Spleen (tissue), 13 donors: ENCODE measurements at regions of chr16 and their contacts with region 1.

Region 1: DNA sequence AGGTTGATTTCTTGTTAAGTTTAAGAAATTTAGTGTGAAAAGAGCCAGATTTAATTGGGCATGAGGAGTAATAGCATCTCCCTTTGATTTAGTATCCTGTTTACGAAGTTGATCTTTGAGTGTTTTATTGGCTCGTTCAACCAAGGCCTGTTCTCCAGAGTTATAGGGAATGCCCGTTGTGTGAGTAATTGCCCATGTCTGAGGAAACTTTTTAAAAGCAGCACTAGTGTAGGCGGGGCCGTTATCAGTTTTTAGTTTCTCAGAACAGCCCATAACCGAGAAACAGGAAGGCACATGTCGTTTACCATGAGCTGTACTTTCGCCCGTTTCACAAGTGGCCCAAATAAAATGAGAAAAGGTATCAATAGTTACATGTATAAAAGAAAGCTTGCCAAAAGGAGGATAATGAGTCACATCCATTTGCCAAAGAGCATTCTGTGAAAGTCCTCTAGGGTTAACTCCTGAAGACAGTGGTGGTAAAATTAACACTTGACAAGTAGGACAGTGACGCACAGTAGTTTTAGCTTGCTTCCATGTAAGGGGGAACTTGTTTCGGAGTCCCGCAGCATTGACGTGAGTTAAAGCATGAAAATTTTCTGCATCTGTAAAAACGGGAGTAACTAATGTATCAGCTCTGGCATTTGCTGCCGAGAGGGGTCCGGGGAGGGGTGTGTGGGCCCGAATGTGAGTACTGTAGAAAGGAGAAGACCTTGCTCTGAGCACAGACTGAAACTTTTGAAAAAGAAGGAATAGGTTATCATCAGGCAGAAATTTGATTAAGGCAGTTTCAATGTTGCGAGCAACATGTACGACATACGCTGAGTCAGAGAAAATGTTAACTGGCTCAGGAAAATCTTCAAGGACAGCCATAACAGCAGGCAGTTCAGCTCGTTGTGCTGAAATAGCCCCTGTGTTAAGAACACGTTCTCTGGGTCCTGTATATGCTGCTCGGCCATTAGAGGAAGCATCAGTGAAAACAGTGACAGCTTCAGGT is 18.5 kb upstream of the KCTD5 start:
- DNase-seq: no peak
- H3K4me3 ChIP-seq: no peak overlapping the region
- H3K27ac ChIP-seq: peak overlapping the region in 7 of 8 donors; percentile 15 to 57 (median 27)
- H3K4me1 ChIP-seq: peaks cover 0 to 15% (median 0%) of the 10 kb centered on the region in 6 donors
- H3K27me3 ChIP-seq: no peaks in the 10 kb centered on the region
- CTCF ChIP-seq: no peak
- POLR2A ChIP-seq: no peak

Region 2: GRCh38 chr16:2244245-2244691 is 419.6 kb before region 1 on chr16:
- intact Hi-C with region 1: no loop called
- DNase-seq: no peak
- H3K4me3 ChIP-seq: no peak overlapping the region
- H3K27ac ChIP-seq: no peak overlapping the region
- H3K4me1 ChIP-seq: peaks cover 0 to 21% (median under 1%) of the 10 kb centered on the region in 6 donors
- H3K27me3 ChIP-seq: no peaks in the 10 kb centered on the region
- CTCF ChIP-seq: no peak
- POLR2A ChIP-seq: no peak

Region 3: GRCh38 chr16:2474877-2475412 is 188.9 kb before region 1 on chr16 and contains the start of gene TBC1D24:
- intact Hi-C with region 1: no loop called
- DNase-seq: peak; percentile 97
- H3K4me3 ChIP-seq: peak within 1 kb of the TSS; percentile 64 to 93 (median 70)
- H3K27ac ChIP-seq: peak within 1 kb of the TSS; percentile 79 to 93 (median 86)
- H3K4me1 ChIP-seq: peaks cover 7 to 70% (median 48%) of the 10 kb centered on the region in 6 donors
- H3K27me3 ChIP-seq: peaks cover 0 to 45% (median 37%) of the 10 kb centered on the region in 7 donors
- CTCF ChIP-seq: no peak
- POLR2A ChIP-seq: peak in 1 of 3 donors; percentile 43
- total RNA-seq, gene TBC1D24: 9.7 to 15.3 (median 12.8) TPM

Region 4: DNA sequence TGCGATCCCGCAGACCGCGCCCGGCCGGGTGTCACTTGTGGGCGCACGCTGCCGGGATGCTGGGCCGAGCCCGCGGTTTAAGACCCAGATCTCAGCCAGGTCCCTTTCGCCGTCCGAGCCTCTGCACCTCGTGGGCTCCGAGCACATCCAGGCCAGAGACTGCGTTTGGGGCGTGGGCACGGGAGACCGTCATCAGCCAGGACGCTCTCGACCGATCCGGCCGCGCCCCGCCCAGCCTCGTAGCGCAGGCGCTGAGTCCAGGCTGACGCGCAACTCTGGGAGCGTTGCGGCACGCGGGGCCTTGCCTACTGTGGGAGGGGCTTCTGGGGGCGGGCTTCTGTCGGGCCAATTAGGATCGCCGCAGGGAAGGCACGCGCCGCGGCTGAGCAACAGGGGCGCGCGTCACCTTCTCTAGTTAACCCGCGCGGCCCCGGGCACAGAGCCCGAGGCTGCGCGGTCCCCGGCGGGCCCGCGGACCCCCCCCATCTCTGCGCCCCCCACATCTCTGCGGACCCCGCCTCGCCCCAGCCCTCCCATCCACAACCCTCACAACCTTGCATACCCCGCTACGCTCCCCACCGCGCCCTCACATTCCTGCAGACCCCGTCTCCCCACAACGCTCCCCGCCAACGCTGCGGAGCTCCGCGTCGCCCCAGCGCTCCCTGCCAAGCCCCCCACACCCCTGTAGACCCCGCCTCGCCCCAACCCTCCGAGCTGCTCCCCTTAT is 131.9 kb before region 1 on chr16:
- intact Hi-C with region 1: loop called (anchors 5 kb)
- DNase-seq: peak; percentile 100
- H3K4me3 ChIP-seq: peak overlapping the region; percentile 33 to 78 (median 56)
- H3K27ac ChIP-seq: peak overlapping the region; percentile 93 to 99 (median 98)
- H3K4me1 ChIP-seq: peaks cover 6 to 66% (median 37%) of the 10 kb centered on the region in 6 donors
- H3K27me3 ChIP-seq: no peaks in the 10 kb centered on the region
- CTCF ChIP-seq: peak in 1 of 11 experiments; percentile 19
- POLR2A ChIP-seq: peak in 1 of 3 donors; percentile 2

Region 5: DNA sequence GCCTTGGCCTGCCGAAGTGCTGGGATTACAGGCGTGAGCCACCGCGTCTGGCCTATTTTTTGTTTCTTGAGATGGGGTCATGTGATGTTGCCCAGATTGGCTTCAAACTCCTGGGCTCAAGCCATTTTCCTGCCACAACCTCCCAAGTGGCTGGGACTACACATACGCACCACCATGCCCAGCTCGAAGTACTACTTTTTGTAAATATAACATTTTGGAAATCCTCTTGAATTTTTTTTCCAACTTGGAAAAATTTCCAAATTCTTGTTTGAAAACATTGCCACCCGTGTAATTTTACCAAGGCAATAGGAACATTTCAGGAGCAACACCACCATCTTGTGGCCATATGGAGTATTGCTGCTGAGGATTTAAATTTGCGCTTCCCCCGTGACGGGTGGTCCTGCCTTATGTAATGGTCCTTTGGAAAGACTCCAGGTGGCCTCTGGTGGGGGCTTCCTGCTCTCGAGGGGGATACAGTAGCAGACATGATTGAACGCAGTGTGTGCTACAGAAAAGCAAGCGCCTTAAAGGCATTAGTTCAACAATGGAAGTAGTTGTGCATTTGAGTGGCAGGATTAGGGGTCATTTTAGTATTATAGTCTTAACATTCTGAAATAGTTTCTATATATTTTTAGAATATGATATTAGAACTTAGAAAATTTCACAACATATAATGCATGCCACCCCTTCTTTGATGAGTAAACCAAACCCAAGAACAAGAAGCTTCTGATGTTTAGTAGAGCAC is 255.8 kb after region 1 on chr16:
- intact Hi-C with region 1: no loop called
- DNase-seq: no peak
- H3K4me3 ChIP-seq: no peak overlapping the region
- H3K27ac ChIP-seq: peak overlapping the region in 5 of 8 donors; percentile 2 to 54 (median 39)
- H3K4me1 ChIP-seq: peaks cover 0 to 23% (median 8%) of the 10 kb centered on the region in 6 donors
- H3K27me3 ChIP-seq: no peaks in the 10 kb centered on the region
- CTCF ChIP-seq: peak; percentile 70 to 97 (median 92)
- POLR2A ChIP-seq: no peak